PC-9 (cell line): ENCODE measurements at regions of chr1 and their contacts with region 1.

Region 1: GRCh38 chr1:18581420-18581880 is 49.2 kb upstream of the PAX7 start:
- DNase-seq: peak in 1 of 2 experiments; percentile 45
- H3K4me3 ChIP-seq: no peak overlapping the region
- H3K27ac ChIP-seq: no peak overlapping the region
- H3K4me1 ChIP-seq: no peaks in the 10 kb centered on the region
- H3K27me3 ChIP-seq: peaks cover 11% of the 10 kb centered on the region; the same call in 1 of the 2 replicates
- CTCF ChIP-seq: peak; percentile 80

Region 2: GRCh38 chr1:17494114-17494729 is 1087.2 kb before region 1 on chr1:
- CTCF ChIA-PET with region 1: interaction called, 8 read pairs
- POLR2A ChIA-PET with region 1: no interaction called
- intact Hi-C with region 1: loop called (anchors 10 kb)
- DNase-seq: peak; percentile 76 to 77
- H3K4me3 ChIP-seq: no peak overlapping the region
- H3K27ac ChIP-seq: no peak overlapping the region
- H3K4me1 ChIP-seq: peaks cover 7% of the 10 kb centered on the region; the same call in 1 of the 2 replicates
- H3K27me3 ChIP-seq: no peaks in the 10 kb centered on the region
- CTCF ChIP-seq: peak; percentile 89

Region 3: GRCh38 chr1:17653728-17654351 is 927.6 kb before region 1 on chr1:
- CTCF ChIA-PET with region 1: no interaction called
- POLR2A ChIA-PET with region 1: interaction called, 6 read pairs
- intact Hi-C with region 1: loop called (anchors 10 kb)
- DNase-seq: peak in 1 of 2 experiments; percentile 43
- H3K4me3 ChIP-seq: no peak overlapping the region
- H3K27ac ChIP-seq: no peak overlapping the region
- H3K4me1 ChIP-seq: no peaks in the 10 kb centered on the region
- H3K27me3 ChIP-seq: no peaks in the 10 kb centered on the region
- CTCF ChIP-seq: peak; percentile 65

Region 4: DNA sequence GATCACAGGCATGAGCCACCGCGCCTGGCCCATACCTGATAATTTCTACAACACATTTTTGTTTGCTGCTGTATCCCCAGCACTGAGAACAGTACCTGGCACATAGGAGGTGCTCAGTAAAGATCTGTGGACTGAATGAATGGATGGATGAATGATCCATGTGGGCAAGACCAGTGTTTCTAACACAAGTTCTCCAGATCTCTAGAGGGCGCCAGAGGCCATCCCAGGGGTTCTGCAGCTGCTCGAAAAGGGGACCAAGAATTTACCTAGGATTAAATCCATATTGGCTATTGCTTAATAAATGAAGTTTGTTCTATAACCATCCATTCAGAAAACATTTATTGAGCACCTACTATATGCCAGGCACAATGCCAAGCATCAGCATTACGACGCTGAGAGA is 658.6 kb before region 1 on chr1:
- CTCF ChIA-PET with region 1: no interaction called
- POLR2A ChIA-PET with region 1: no interaction called
- intact Hi-C with region 1: loop called (anchors 5 kb)
- DNase-seq: peak in 1 of 2 experiments; percentile 5
- H3K4me3 ChIP-seq: no peak overlapping the region
- H3K27ac ChIP-seq: no peak overlapping the region
- H3K4me1 ChIP-seq: no peaks in the 10 kb centered on the region
- H3K27me3 ChIP-seq: peaks cover 27% of the 10 kb centered on the region
- CTCF ChIP-seq: peak; percentile 56; the same call in 1 of the 2 replicates

Region 5: DNA sequence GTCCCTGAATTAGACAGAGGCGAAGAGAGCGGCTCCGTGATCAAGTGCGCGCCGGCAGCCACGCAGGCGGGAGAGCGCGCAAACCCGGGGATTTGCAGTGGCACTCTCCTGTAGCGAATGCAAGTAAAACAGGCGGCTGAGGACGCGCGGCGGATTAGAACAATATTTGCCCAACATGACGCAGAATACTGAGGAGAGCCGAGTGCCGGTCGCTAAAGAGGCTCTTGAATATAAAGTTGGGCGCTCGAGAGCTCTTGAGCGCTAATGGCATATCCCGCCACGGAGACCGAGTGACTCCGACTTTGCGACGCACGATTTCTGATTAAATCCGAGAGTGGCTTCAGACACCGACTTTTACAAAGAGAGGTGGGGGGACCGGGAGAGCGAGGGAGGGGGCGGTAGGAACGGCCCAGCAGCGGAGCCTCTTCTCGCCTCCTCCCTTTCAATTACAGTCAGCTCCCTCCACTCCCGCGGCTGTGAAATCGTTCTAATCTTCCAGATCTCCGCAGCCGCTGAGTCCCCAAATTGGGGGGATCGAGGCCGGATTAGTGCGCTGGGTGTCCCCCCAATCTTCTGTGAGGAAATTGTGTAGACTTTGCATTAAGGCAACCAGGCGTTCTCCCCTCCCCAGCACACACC is 51.5 kb after region 1 on chr1:
- CTCF ChIA-PET with region 1: no interaction called
- POLR2A ChIA-PET with region 1: no interaction called
- intact Hi-C with region 1: no loop called
- DNase-seq: no peak
- H3K4me3 ChIP-seq: no peak overlapping the region
- H3K27ac ChIP-seq: no peak overlapping the region
- H3K4me1 ChIP-seq: no peaks in the 10 kb centered on the region
- H3K27me3 ChIP-seq: peaks cover 4% of the 10 kb centered on the region; the same call in 1 of the 2 replicates
- CTCF ChIP-seq: no peak